SK-N-SH (cell line): ENCODE measurements at regions of chr19 and their contacts with region 1.

Region 1: DNA sequence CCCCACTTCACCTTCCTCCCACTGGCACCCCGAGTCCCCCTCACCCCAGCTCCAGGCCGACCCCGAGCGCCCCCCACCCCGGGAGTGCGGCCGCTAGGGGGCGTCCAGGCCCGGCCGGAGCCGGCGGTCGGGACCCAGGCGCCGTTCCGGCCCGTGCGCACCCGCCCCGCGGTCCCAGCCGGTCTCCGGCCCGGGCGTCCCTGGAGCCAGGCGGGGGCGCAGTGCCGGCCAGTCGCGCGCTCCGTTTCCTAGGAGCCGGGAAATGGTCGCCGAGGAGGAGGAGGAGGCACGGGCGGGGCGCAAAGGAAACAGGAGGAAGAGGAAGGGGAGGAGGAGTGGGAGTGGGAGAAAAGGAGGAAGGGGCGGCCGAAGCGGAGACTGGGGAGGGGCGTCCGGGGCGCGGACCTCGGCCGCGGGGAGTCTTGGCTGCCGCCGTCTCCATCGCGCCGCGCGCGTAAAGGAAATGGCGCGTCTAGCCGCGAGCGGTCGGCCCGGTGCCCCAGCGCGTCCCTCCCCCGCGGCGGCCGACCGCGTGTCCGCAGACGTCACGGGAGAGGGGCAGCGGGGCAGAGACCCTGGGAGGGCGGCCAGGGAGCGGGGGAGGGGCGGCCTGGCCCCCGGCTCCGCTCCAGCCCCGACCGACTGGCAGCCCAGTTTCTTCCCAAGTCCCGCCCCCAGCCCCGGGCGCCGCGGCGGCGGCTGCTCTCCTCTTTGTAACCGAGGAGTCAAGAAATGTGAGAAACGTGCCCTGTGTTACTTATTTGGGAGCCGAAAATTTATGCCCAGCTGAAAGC is 1.1 kb upstream of the KCTD15 start:
- DNase-seq: peak; percentile 96
- H3K4me3 ChIP-seq: peak overlapping the region; percentile 49 to 69
- H3K27ac ChIP-seq: peak overlapping the region; percentile 80 to 82
- H3K4me1 ChIP-seq: peaks cover 0 to 37% of the 10 kb centered on the region in 2 experiments; a peak in 2 of 4 replicates
- H3K27me3 ChIP-seq: no peaks in the 10 kb centered on the region
- CTCF ChIP-seq: peak; percentile 90; the same call in 1 of the 2 replicates
- EP300 ChIP-seq: no peak
- RAD21 ChIP-seq: peak; percentile 55; the same call in 1 of the 2 replicates

Region 2: GRCh38 chr19:33815380-33816340 is 20.1 kb after region 1 on chr19:
- CTCF ChIA-PET with region 1: interaction called, 40 read pairs
- POLR2A ChIA-PET with region 1: interaction called, 10 read pairs
- DNase-seq: peak; percentile 55
- H3K4me3 ChIP-seq: no peak overlapping the region
- H3K27ac ChIP-seq: peak overlapping the region in 1 of 2 experiments; percentile 92; a peak in 2 of 4 replicates
- H3K4me1 ChIP-seq: peaks cover 0 to 42% of the 10 kb centered on the region in 2 experiments; a peak in 2 of 4 replicates
- H3K27me3 ChIP-seq: no peaks in the 10 kb centered on the region
- CTCF ChIP-seq: no peak
- EP300 ChIP-seq: peak in 1 of 2 experiments; percentile 34; a peak in 1 of 4 replicates
- RAD21 ChIP-seq: no peak

Region 3: DNA sequence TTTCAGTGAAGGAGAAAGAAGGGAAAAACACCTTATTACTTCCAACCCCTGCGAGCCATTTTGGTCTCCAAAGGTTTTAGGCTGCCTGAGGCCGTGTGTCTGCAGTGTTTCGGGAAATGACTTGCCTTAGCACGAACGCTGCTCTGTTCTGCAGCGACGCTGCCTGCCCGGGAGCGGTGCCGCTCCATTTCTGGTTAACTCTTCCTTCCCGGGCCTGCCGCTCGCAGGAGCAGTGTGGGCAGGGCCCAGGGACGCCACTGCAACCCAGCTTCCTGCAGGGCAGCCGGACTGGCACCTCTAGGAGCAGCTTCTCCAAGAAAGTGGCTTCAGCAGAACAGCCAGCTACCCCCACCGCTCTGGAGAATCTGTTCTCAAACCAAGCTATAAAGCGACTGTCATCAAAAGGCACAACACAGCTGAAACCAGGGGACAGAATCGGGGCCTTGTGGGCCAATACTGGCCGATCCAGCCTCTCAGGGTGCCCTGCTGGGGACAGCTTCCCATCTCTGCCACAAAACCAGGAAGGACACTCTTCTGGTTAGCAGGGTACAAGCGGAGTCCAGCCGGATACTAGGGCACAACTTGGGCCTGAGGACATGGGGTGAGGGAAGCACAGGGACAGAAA is 73.3 kb after region 1 on chr19:
- CTCF ChIA-PET with region 1: interaction called, 14 read pairs
- POLR2A ChIA-PET with region 1: interaction called, 24 read pairs
- DNase-seq: peak; percentile 73
- H3K4me3 ChIP-seq: no peak overlapping the region
- H3K27ac ChIP-seq: peak overlapping the region in 1 of 2 experiments; percentile 98; a peak in 2 of 4 replicates
- H3K4me1 ChIP-seq: peaks cover 0 to 30% of the 10 kb centered on the region in 2 experiments; a peak in 2 of 4 replicates
- H3K27me3 ChIP-seq: no peaks in the 10 kb centered on the region
- CTCF ChIP-seq: no peak
- EP300 ChIP-seq: peak in 1 of 2 experiments; percentile 57; a peak in 2 of 4 replicates
- RAD21 ChIP-seq: peak; percentile 45; the same call in 1 of the 2 replicates

Region 4: DNA sequence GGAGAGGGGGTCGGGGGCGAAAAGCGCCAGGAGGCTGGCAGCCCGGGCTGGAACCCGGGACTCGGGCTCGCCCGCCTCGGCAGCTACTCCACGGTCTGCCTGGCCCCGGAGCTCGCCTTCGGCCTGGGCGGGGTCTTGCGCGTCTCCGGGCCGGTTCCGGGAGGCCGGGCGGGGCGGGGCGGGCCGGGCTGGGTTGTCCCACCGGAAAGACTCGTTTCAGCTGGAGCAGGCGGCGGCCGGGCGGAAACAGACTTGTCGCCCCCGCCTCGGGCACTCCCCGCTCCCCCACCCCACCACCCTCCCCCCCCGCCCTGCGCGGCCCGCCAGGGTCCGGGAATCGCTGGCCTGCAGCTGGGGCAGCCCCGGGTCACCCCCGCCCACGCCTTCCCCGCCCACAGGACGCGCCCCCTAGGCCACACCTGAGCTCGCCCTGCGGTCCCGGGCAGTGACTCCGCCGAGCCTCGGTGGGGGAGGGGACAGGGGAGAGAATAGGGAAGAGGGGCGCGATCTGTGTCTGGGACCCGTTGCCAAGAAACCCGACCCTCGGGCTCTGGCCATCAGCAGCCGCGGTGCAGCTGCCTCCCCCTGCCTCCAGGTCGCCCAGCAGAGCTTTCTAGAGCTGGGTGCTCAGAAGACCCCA is 110.5 kb after region 1 on chr19:
- CTCF ChIA-PET with region 1: interaction called, 5 read pairs
- POLR2A ChIA-PET with region 1: interaction called, 11 read pairs
- DNase-seq: peak; percentile 85
- H3K4me3 ChIP-seq: peak overlapping the region in 1 of 2 experiments; percentile 21; a peak in 1 of 4 replicates
- H3K27ac ChIP-seq: no peak overlapping the region
- H3K4me1 ChIP-seq: peaks cover 0 to 5% of the 10 kb centered on the region in 2 experiments; a peak in 1 of 4 replicates
- H3K27me3 ChIP-seq: no peaks in the 10 kb centered on the region
- CTCF ChIP-seq: no peak
- EP300 ChIP-seq: no peak
- RAD21 ChIP-seq: no peak

Region 5: DNA sequence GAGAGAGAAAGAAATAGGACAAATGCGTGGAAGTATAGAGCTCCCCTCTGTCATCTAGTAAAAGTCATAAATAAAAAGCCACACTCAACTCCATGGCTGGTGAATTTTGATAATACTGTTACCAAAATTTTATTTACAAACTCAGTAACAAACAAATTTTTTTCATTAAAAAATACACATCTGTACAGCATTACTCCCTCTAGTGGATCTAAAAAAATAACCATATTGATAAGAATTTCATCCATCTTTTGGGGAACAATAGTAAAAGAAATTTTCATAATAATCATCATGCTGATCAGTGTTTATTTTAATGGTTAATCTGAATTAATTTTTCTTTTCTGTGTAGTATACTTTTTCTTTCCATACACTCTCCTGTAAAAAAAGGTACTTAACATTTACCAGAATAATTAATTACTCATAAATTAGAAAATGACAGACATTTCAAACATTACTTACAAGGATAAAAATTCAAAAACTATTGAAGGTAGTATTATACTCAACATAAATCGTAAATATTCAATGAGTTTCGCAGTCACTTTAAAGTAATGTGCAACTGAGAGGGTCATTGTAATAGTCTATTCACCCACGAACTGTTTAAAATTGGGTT is 203.3 kb after region 1 on chr19:
- CTCF ChIA-PET with region 1: interaction called, 79 read pairs
- POLR2A ChIA-PET with region 1: interaction called, 11 read pairs
- DNase-seq: peak; percentile 33
- H3K4me3 ChIP-seq: no peak overlapping the region
- H3K27ac ChIP-seq: no peak overlapping the region
- H3K4me1 ChIP-seq: no peaks in the 10 kb centered on the region; a peak in 1 of 4 replicates
- H3K27me3 ChIP-seq: no peaks in the 10 kb centered on the region
- CTCF ChIP-seq: peak; percentile 63
- EP300 ChIP-seq: no peak
- RAD21 ChIP-seq: peak; percentile 49